ENCODE measurements at regions of chr20 and their contacts with region 1.

Region 1: GRCh38 chr20:2742934-2743559 is 50.5 kb downstream of the EBF4 start:
- DNase-seq: peak; percentile 74 to 80 (median 77)
- H3K4me3 ChIP-seq: no peak overlapping the region
- H3K27ac ChIP-seq: no peak overlapping the region
- H3K4me1 ChIP-seq: peaks cover 2 to 25% (median 16%) of the 10 kb centered on the region in 4 experiments
- H3K27me3 ChIP-seq: peaks cover 0 to 3% (median 0%) of the 10 kb centered on the region in 5 experiments

Region 2: DNA sequence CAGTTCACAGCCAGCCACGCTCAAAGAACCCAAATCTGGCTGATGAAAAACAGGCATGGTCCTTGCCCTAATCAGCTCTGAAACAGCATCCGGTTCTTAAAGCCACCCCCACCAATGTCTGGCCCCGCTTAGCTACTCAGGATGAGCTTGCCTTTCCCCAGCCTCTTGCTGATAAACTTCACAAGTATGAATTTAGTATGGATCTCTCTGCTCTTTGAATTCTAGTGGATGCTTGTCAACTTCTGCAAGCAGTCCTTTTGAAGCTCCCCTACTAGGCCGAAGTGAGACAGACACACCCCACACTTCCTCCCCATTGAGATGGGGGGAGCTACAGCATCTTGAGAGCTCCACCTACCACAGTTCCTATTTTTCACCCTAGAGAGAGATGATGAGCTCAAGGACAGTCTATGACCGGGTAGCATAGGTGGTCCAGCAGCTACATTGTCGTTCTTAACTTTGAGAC is 13.8 kb before region 1 on chr20:
- CTCF ChIA-PET with region 1: interaction called, 91 read pairs
- POLR2A ChIA-PET with region 1: interaction called, 6 read pairs
- DNase-seq: peak; percentile 82 to 94 (median 89)
- H3K4me3 ChIP-seq: no peak overlapping the region
- H3K27ac ChIP-seq: no peak overlapping the region
- H3K4me1 ChIP-seq: peaks cover 0 to 15% (median 11%) of the 10 kb centered on the region in 4 experiments
- H3K27me3 ChIP-seq: no peaks in the 10 kb centered on the region

Region 3: DNA sequence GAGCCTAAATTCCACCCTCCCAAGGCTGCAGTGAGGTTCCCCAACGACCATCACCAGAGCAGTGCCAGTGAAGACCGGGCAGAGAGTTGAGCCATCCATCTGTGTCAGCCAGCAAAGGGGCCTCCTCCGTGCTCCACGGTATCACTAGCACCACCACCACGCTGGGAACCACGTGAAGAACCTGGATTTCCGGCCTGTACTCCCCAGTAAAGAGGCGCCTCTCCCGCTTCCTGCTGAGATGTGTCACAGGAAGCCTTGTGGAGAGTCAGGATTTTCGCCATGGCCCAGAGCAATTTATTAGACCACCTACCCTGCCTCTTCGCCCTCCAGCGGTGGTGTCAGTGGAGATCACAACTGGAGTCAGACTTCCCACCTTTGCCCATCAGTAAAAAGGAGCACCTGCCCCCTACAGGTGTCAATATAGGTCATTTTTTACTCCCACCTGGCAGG is 28.6 kb after region 1 on chr20:
- CTCF ChIA-PET with region 1: no interaction called
- POLR2A ChIA-PET with region 1: no interaction called
- DNase-seq: peak in 2 of 3 donors; percentile 20 to 22
- H3K4me3 ChIP-seq: peak overlapping the region in 1 of 7 experiments; percentile 28
- H3K27ac ChIP-seq: no peak overlapping the region
- H3K4me1 ChIP-seq: peaks cover 0 to 13% (median 8%) of the 10 kb centered on the region in 4 experiments
- H3K27me3 ChIP-seq: peaks cover 0 to 2% (median 0%) of the 10 kb centered on the region in 5 experiments

Measured in common myeloid progenitor, CD34-positive (primary cell).